ENCODE measurements at regions of chr6 and their contacts with region 1.

Region 1: DNA sequence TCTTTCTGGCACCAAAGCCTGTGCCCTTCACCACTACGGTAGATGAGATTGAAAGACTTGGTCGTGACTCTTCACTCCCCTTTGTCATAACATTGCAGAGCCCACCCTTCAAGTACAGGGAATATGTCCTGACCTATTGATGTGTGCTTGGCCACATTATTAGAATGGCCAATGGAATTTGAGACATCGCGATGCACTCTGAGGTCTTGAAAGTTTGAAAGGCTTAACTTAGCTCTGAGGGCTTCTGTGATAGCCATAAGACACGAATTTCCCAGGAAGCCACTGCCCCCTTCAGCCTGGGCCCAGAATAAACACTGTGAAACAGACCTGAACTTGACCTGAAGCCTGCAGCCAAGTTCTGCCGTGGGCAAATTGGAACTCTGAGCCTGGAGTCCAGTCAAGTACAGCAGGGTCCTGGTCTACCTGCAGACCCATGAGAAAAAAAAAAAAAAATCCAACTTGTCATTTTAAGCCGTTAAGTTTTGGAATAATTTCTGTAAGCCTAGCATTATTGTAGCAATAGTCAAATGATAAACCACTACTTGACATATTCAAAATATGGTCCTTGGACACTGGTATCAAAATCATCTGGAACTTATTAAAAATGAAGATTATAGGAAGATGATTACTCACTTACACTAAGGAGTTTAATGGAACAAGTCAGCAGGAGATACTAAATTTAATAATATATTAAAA is 36.9 kb upstream of the TRAF3IP2 start:
- DNase-seq: peak; percentile 68
- H3K4me3 ChIP-seq: no peak overlapping the region
- H3K27ac ChIP-seq: no peak overlapping the region
- H3K4me1 ChIP-seq: peaks cover 0 to 3% (median 0%) of the 10 kb centered on the region in 4 donors
- H3K27me3 ChIP-seq: no peaks in the 10 kb centered on the region
- CTCF ChIP-seq: peak; percentile 55 to 72 (median 68)
- EP300 ChIP-seq: no peak
- POLR2A ChIP-seq: no peak

Region 2: DNA sequence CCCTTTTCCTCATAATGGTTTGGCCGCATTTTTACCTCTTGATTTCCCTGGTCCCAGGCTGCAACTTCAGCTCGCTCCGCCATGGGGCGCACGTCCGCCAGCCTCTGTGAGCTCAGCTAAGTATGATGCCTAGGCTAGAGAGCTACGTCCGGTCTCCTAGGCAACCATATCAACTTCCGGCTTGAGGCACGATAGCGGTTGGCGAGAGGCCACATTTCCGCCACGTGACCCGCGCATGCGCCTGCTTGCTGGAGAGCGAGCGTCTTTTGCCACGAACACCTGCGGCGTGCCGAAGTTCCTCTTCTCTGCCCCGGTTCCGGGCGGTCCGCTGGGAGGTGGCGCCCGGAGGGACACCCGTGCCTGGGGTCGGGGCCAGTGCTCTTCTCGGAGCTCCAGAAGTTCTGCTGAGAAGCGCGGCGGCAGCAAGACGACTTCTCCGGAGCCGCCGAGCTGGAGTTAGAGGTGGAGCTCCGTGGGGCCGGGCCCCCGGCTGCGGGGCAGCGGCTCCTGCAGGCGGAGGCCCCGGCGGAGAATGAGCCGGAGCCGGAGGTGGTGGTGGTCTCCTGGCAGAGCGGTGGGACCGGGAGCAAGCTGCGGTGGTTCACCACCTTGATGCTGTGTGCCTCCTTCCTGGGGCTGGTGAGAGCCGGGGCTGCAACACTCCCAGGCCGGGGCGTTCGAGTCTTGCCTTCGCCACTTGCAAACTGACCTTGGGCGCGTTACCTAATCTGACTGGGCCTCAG is 383.4 kb before region 1 on chr6:
- in situ Hi-C with region 1: loop called in 2 of 4 experiments (anchors 25 kb)
- intact Hi-C with region 1: no loop called
- DNase-seq: peak; percentile 99
- H3K4me3 ChIP-seq: peak overlapping the region; percentile 57 to 87 (median 68)
- H3K27ac ChIP-seq: peak overlapping the region; percentile 95 to 96 (median 96)
- H3K4me1 ChIP-seq: peaks cover 9 to 26% (median 13%) of the 10 kb centered on the region in 4 donors
- H3K27me3 ChIP-seq: no peaks in the 10 kb centered on the region
- CTCF ChIP-seq: peak; percentile 90 to 99 (median 94)
- EP300 ChIP-seq: no peak
- POLR2A ChIP-seq: peak; percentile 72

Region 3: GRCh38 chr6:111361648-111362047 is 281.0 kb before region 1 on chr6:
- in situ Hi-C with region 1: loop called in 1 of 4 experiments (anchors 25 kb)
- intact Hi-C with region 1: loop called (anchors 10 kb)
- DNase-seq: peak; percentile 23
- H3K4me3 ChIP-seq: no peak overlapping the region
- H3K27ac ChIP-seq: no peak overlapping the region
- H3K4me1 ChIP-seq: peaks cover 0 to 2% (median 0%) of the 10 kb centered on the region in 4 donors
- H3K27me3 ChIP-seq: no peaks in the 10 kb centered on the region
- CTCF ChIP-seq: peak; percentile 27 to 47 (median 32)
- EP300 ChIP-seq: no peak
- POLR2A ChIP-seq: no peak

Region 4: GRCh38 chr6:111382476-111383300 is 259.9 kb before region 1 on chr6:
- in situ Hi-C with region 1: loop called in 1 of 4 experiments (anchors 25 kb)
- intact Hi-C with region 1: no loop called
- DNase-seq: no peak
- H3K4me3 ChIP-seq: no peak overlapping the region
- H3K27ac ChIP-seq: peak overlapping the region in 2 of 4 donors; percentile 8 to 18
- H3K4me1 ChIP-seq: no peaks in the 10 kb centered on the region
- H3K27me3 ChIP-seq: no peaks in the 10 kb centered on the region
- CTCF ChIP-seq: no peak
- EP300 ChIP-seq: no peak
- POLR2A ChIP-seq: no peak

Region 5: DNA sequence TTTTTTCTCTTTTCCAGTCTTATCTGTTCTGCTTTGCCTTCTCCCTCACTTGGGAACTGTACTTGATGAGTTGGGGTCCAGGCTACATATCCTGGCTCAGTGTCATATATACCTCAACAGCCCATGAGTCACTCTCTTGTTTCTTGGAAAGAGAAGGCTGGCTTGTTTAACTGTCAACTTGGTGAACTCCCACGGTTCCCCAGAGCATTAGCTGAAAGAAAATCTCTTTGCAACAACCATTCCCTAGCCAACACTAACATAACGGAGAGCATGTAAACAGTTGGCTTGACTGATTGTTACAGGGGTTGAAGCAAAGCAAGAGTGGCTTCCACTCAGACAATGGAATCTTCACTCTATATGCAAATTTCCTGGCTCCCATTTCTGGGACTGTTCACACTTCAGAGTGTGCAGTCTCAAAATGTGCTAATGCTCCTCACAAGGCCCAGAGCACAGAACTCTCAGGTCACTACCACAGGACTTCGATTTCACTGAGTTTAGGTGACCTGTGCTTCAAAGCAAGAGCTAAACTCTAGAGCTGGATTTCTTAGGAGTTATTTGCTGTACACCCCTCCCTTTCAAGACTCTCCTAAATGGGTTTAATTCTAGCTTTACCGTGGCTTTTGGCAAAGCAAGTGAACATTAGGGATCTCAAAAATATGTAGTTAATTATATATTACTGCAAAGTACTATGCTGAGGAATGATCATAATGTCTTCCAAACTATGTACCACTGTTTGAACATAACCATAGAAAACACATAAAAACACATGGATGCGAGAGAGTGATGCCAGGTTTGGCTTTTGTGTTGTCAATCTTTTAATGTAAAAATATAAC is 1314.3 kb after region 1 on chr6:
- in situ Hi-C with region 1: no loop called
- intact Hi-C with region 1: no loop called
- DNase-seq: no peak
- H3K4me3 ChIP-seq: no peak overlapping the region
- H3K27ac ChIP-seq: no peak overlapping the region
- H3K4me1 ChIP-seq: peaks cover 0 to 6% (median 0%) of the 10 kb centered on the region in 4 donors
- H3K27me3 ChIP-seq: no peaks in the 10 kb centered on the region
- CTCF ChIP-seq: no peak
- EP300 ChIP-seq: no peak
- POLR2A ChIP-seq: no peak